Calu3 (cell line): ENCODE measurements at regions of chr20 and their contacts with region 1.

Region 1: DNA sequence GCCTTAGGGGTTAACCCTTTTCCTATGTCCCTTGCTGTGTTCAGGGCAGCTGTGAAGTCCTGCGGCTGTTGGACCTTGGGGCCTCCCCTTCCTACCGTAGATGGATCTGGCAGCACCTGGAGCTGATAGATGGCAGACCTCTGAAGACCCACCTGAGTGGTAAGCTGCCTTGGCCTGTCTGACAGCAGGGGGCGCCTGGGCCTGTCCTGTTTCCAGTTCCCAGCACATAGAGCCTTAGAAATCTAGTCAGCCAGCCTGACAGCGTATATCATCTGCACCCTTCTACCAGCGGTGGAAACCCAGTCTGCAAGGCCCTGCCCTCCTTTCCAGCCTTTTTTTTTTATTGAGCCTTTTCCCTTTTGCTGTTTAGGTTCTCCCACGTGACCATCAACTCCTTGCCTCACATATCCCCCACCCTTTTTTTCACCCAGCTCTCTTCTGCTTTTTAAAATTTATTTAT is 26.6 kb downstream of the CNBD2 start:
- DNase-seq: peak; percentile 97
- H3K4me3 Mint-ChIP-seq: no peak overlapping the region
- H3K27ac Mint-ChIP-seq: no peak overlapping the region
- H3K4me1 Mint-ChIP-seq: peaks cover 11% of the 10 kb centered on the region
- H3K27me3 Mint-ChIP-seq: peaks cover 2% of the 10 kb centered on the region
- CTCF ChIP-seq: peak; percentile 97

Region 2: DNA sequence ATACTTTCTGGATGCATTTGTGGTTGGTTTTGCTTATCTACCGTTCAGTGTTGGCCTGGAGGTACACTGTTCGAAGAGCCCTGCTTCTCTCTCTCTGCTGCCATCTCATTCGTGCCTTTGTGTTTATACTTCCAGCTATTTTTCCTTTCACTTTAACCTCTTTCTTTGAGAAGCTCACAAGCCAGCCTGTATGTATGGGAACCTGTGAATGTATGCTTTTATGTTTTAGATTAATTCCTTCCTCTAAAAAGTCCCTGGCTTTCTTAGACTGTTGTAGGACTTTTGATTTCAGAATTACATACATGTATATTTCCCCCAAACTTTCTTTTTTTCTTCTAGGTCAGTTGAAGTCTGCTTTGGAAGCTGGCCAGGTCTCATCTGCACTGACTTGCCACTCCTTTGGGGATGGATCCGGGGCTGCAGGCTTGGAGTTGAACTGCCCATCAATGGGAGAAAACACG is 123.7 kb before region 1 on chr20:
- CTCF ChIA-PET with region 1: no interaction called
- intact Hi-C with region 1: no loop called
- DNase-seq: no peak
- H3K4me3 Mint-ChIP-seq: no peak overlapping the region
- H3K27ac Mint-ChIP-seq: peak overlapping the region; percentile 12
- H3K4me1 Mint-ChIP-seq: peaks cover 20% of the 10 kb centered on the region
- H3K27me3 Mint-ChIP-seq: no peaks in the 10 kb centered on the region
- CTCF ChIP-seq: no peak

Region 3: DNA sequence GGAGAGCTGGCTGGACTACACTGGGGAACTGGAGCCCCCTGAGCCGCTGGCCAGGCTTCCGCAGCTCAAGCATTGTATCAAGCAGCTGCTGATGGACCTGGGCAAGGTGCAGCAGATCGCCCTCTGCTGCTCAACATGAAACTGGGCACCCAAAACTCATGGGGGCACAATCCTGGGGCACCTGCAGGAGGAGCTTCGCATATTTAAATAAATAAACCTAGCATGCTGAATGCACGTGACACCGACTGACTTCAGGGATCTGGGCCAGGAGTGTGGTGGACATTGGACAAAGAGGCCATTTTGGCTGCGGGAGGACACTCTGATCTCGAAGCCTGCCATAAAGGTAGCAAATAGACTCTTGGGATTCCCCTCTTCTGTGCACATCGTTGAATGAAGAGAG is 47.5 kb before region 1 on chr20:
- CTCF ChIA-PET with region 1: interaction called, 13 read pairs
- intact Hi-C with region 1: no loop called
- DNase-seq: peak; percentile 41
- H3K4me3 Mint-ChIP-seq: no peak overlapping the region
- H3K27ac Mint-ChIP-seq: no peak overlapping the region
- H3K4me1 Mint-ChIP-seq: peaks cover 9% of the 10 kb centered on the region
- H3K27me3 Mint-ChIP-seq: no peaks in the 10 kb centered on the region
- CTCF ChIP-seq: peak; percentile 79

Region 4: GRCh38 chr20:36035745-36036144 is 40.7 kb after region 1 on chr20:
- CTCF ChIA-PET with region 1: interaction called, 3 read pairs
- intact Hi-C with region 1: loop called (anchors 5 kb)
- DNase-seq: peak; percentile 26
- H3K4me3 Mint-ChIP-seq: no peak overlapping the region
- H3K27ac Mint-ChIP-seq: no peak overlapping the region
- H3K4me1 Mint-ChIP-seq: peaks cover 15% of the 10 kb centered on the region
- H3K27me3 Mint-ChIP-seq: no peaks in the 10 kb centered on the region
- CTCF ChIP-seq: no peak

Region 5: GRCh38 chr20:36085686-36086267 is 90.8 kb after region 1 on chr20:
- CTCF ChIA-PET with region 1: interaction called, 19 read pairs
- intact Hi-C with region 1: loop called (anchors 2 kb)
- DNase-seq: peak; percentile 93
- H3K4me3 Mint-ChIP-seq: peak overlapping the region; percentile 60
- H3K27ac Mint-ChIP-seq: peak overlapping the region; percentile 89
- H3K4me1 Mint-ChIP-seq: peaks cover 82% of the 10 kb centered on the region
- H3K27me3 Mint-ChIP-seq: no peaks in the 10 kb centered on the region
- CTCF ChIP-seq: no peak

Region 6: GRCh38 chr20:36132802-36133211 is 137.8 kb after region 1 on chr20:
- CTCF ChIA-PET with region 1: interaction called, 259 read pairs
- intact Hi-C with region 1: loop called (anchors 1 kb)
- DNase-seq: no peak
- H3K4me3 Mint-ChIP-seq: no peak overlapping the region
- H3K27ac Mint-ChIP-seq: no peak overlapping the region
- H3K4me1 Mint-ChIP-seq: peaks cover 51% of the 10 kb centered on the region
- H3K27me3 Mint-ChIP-seq: no peaks in the 10 kb centered on the region
- CTCF ChIP-seq: no peak

Region 7: GRCh38 chr20:36154700-36155628 is 159.9 kb after region 1 on chr20 and contains the start of gene EPB41L1:
- CTCF ChIA-PET with region 1: interaction called, 11 read pairs
- intact Hi-C with region 1: no loop called
- DNase-seq: no peak
- H3K4me3 Mint-ChIP-seq: peak within 1 kb of the TSS; percentile 65
- H3K27ac Mint-ChIP-seq: peak within 1 kb of the TSS; percentile 9
- H3K4me1 Mint-ChIP-seq: peaks cover 34% of the 10 kb centered on the region
- H3K27me3 Mint-ChIP-seq: no peaks in the 10 kb centered on the region
- CTCF ChIP-seq: no peak
- total RNA-seq, gene EPB41L1: 121 and 184 TPM in 2 replicates

Region 8: DNA sequence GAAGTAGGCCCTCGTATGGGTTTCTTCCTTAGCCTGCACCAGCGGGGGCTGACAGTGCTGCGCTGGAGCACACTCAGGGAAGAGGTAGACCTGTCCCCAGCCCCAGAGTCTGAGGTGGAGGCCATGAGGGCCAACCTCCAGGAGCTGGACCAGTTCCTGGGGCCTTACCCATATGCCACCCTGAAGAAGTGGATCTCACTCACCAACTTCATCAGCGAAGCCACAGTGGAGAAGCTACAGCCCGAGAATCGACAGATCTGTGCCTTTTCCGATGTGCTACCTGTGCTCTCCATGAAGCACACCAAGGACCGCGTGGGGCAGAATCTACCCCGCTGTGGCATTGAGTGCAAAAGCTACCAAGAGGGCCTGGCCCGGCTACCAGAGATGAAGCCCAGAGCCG is 245.1 kb after region 1 on chr20:
- CTCF ChIA-PET with region 1: interaction called, 11 read pairs
- intact Hi-C with region 1: no loop called
- DNase-seq: no peak
- H3K4me3 Mint-ChIP-seq: no peak overlapping the region
- H3K27ac Mint-ChIP-seq: no peak overlapping the region
- H3K4me1 Mint-ChIP-seq: peaks cover 10% of the 10 kb centered on the region
- H3K27me3 Mint-ChIP-seq: no peaks in the 10 kb centered on the region
- CTCF ChIP-seq: no peak